ENCODE measurements at regions of chr17 and their contacts with region 1.

Region 1: DNA sequence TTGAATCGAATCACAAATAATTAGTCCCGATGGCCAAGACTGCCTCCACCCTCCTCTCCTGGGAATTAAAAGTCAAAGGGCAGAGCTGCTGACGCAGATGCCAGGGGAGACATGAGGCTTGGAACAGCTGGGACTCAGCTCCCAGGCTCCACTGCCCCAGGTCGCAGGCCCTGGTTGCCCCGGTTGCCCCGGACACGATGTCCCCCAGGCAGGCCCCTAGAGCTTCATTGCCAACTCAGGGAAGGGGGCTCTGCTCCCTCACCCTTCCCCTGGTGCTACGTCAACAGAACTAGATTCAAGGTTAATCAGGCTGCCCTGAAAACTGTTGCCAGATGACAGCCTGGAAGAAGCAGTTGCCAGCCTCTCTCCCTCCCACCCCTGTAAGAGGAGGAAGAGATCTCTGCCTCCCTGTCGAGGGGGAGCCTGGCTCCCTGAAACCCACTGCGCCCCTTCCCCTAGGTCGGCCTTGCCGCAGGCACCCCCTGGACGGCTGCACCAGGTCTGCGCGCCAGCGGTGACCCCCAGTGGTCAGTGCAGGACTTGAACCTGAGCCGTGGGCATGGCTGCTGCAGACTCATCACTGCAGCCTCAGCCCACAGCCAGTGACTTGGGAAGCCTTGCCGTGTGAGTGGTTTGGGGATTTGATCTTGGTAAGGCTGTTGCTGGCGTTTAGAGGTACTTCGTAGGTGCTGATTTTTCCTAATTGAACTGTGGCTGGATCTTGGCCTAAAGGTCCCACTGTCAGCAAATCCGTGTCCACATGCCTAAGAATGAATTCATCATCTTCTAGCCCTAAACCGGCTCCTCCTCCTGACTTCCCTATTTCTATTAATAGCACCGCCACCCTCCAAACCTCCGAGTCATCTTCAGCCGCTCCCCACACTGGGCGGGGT is 84.1 kb upstream of the TOB1 start:
- DNase-seq: peak; percentile 78 to 92 (median 83)
- ATAC-seq: peak; percentile 77
- H3K4me3 ChIP-seq: no peak overlapping the region
- H3K27ac ChIP-seq: peak overlapping the region; percentile 91 to 96 (median 92)
- H3K4me1 ChIP-seq: peaks cover 52% of the 10 kb centered on the region
- H3K27me3 ChIP-seq: no peaks in the 10 kb centered on the region
- CTCF ChIP-seq: peak; percentile 55 to 91 (median 85)
- POLR2A ChIP-seq: peak in 2 of 3 donors; percentile 69 to 73

Region 2: DNA sequence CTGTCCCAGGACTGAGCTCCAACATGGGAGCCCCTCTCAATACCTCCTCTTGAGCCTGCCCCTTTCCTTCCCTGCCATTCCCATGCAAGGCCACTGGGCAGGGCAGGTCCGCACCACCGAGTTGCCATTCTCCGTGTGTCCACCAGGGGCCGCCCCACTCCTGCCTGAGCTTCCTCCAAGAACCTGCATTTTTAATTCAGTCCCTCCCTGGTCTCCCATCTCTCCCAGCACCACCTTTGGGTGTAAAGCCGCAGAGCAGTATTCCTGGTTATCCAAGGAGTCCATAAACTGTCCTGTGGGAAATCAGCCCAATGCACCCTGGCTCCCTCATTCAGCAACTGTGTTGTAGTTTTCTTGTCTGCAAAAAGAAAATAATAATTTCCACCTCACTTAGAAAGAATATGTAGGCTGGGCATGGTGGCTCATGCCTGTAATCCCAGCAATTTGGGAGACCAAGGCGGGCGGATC is 167.0 kb before region 1 on chr17:
- intact Hi-C with region 1: loop called (anchors 10 kb)
- DNase-seq: peak; percentile 88 to 91 (median 89)
- ATAC-seq: peak; percentile 92
- H3K4me3 ChIP-seq: no peak overlapping the region
- H3K27ac ChIP-seq: no peak overlapping the region
- H3K4me1 ChIP-seq: peaks cover 22% of the 10 kb centered on the region
- H3K27me3 ChIP-seq: no peaks in the 10 kb centered on the region
- CTCF ChIP-seq: peak; percentile 97 to 100 (median 100)
- POLR2A ChIP-seq: no peak

Region 3: GRCh38 chr17:50853015-50853615 is 97.1 kb before region 1 on chr17:
- intact Hi-C with region 1: loop called (anchors 5 kb)
- DNase-seq: no peak
- ATAC-seq: no peak
- H3K4me3 ChIP-seq: no peak overlapping the region
- H3K27ac ChIP-seq: peak overlapping the region in 3 of 4 donors; percentile 60 to 85 (median 76)
- H3K4me1 ChIP-seq: peaks cover 48% of the 10 kb centered on the region
- H3K27me3 ChIP-seq: no peaks in the 10 kb centered on the region
- CTCF ChIP-seq: no peak
- POLR2A ChIP-seq: no peak

Region 4: DNA sequence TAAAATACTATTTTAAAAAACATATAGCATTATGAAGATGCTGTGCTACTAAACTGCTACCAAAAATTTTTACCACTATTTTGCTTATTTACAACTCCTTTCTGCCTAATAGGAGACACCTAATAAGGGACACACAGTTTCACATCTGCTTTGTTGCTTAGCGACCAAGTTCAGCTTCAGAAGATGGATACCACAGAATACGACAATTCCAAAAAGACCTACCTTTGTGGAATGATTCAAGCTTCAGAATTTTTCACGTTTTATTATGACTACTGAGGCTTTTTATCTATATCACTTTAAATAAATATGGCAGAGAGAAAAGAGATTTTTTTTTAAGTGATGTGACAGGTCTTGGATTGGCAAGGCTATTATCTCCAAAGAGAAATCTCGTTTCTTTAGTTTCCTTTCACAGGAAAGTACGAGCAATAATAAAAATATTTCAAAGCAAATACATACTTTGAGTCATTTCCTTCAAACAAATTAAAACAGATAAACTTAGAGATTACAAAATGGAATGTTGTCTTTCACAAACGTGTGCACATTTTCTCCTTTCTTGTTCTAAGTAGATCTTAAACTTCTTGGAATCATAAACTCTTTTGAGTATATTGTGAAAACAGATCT is 135.1 kb after region 1 on chr17:
- intact Hi-C with region 1: no loop called
- DNase-seq: no peak
- ATAC-seq: no peak
- H3K4me3 ChIP-seq: no peak overlapping the region
- H3K27ac ChIP-seq: no peak overlapping the region
- H3K4me1 ChIP-seq: peaks cover 24% of the 10 kb centered on the region
- H3K27me3 ChIP-seq: no peaks in the 10 kb centered on the region
- CTCF ChIP-seq: no peak
- POLR2A ChIP-seq: no peak